Calu3 (cell line): ENCODE measurements at regions of chr9 and their contacts with region 1.

Region 1: GRCh38 chr9:75601279-75601678 is 289.2 kb upstream of the PCSK5 start:
- DNase-seq: no peak
- H3K4me3 Mint-ChIP-seq: no peak overlapping the region
- H3K27ac Mint-ChIP-seq: no peak overlapping the region
- H3K4me1 Mint-ChIP-seq: no peaks in the 10 kb centered on the region
- H3K27me3 Mint-ChIP-seq: peaks cover 44% of the 10 kb centered on the region
- CTCF ChIP-seq: no peak

Region 2: DNA sequence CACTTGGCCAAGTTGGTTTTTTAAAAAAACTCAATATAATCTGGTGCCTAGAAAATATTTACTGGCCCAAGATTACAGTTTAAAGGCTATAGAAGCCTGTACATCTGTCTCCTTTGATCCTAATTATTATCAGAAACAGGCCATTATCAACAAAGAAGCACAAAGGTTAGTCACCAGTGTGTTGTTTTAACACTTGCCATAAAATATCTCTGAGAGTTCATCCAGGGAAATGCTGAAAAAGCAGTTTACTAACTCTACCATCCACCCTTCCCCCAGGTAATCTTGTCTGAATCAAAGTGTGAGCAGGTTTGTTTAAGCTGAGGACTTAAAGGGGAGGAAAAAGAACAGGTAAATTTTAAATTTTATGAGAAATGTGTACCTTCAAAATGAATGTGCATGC is 700.3 kb before region 1 on chr9:
- CTCF ChIA-PET with region 1: no interaction called
- intact Hi-C with region 1: no loop called
- DNase-seq: no peak
- H3K4me3 Mint-ChIP-seq: no peak overlapping the region
- H3K27ac Mint-ChIP-seq: no peak overlapping the region
- H3K4me1 Mint-ChIP-seq: no peaks in the 10 kb centered on the region
- H3K27me3 Mint-ChIP-seq: no peaks in the 10 kb centered on the region
- CTCF ChIP-seq: no peak

Region 3: GRCh38 chr9:75855509-75855908 is 254.2 kb after region 1 on chr9:
- CTCF ChIA-PET with region 1: interaction called, 24 read pairs
- intact Hi-C with region 1: loop called (anchors 1 kb)
- DNase-seq: peak; percentile 22
- H3K4me3 Mint-ChIP-seq: no peak overlapping the region
- H3K27ac Mint-ChIP-seq: no peak overlapping the region
- H3K4me1 Mint-ChIP-seq: no peaks in the 10 kb centered on the region
- H3K27me3 Mint-ChIP-seq: no peaks in the 10 kb centered on the region
- CTCF ChIP-seq: no peak

Region 4: DNA sequence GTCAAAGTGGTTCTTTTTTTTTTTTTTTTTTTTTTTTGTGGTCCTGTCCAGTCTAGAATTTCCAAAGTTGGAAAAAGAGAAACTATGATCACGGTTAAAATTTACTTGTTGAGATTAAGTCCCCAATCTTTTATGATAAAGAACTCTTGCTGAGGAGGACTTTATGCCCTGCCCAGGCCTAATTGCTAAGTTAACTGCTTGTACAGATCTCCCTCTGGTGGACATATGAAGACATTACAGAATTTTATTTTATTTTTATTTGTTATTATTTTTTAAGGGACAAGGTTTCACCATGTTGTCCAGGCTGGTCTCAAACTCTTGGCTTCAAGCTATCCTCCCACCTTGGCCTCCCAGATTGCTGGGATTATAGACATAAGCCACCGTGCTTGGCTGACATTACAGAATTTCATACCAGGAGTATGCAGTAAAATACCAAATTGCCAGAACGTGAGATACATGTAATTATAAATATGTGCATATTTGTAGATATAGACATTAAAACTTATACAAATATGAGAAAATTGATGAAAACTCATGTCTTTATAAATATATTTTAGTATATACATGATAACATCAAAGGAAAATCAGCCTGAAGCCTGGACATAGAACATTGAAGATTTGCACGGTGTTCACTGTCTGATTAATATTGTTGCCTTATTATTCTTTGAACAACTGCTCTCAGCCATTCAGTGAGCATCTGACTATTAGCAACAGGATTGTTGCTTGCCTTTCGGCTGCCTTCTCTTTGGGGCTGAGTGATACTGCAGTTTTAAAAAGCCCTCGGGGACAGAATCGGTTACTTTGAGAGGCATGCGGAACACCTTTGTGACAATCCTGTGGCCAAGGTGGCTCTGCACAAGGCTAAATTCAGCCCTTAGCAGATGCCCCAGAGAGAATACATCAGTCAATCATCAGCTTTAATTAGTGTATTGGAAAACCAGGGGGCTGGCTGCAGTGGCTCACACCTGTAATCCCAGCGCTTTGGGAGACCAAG is 702.0 kb after region 1 on chr9:
- CTCF ChIA-PET with region 1: no interaction called
- intact Hi-C with region 1: loop called (anchors 2 kb)
- DNase-seq: no peak
- H3K4me3 Mint-ChIP-seq: no peak overlapping the region
- H3K27ac Mint-ChIP-seq: no peak overlapping the region
- H3K4me1 Mint-ChIP-seq: no peaks in the 10 kb centered on the region
- H3K27me3 Mint-ChIP-seq: no peaks in the 10 kb centered on the region
- CTCF ChIP-seq: peak; percentile 24